Body of pancreas (tissue), 4 donors: ENCODE measurements at regions of chrX and their contacts with region 1.

Region 1: GRCh38 chrX:136546371-136546781 is 14.4 kb downstream of the VGLL1 start:
- DNase-seq: no peak
- ATAC-seq: no peak
- H3K4me3 ChIP-seq: no peak overlapping the region
- H3K27ac ChIP-seq: no peak overlapping the region
- H3K4me1 ChIP-seq: no peaks in the 10 kb centered on the region
- H3K27me3 ChIP-seq: no peaks in the 10 kb centered on the region
- CTCF ChIP-seq: no peak
- POLR2A ChIP-seq: no peak

Region 2: GRCh38 chrX:136488706-136489105 is 57.7 kb before region 1 on chrX:
- intact Hi-C with region 1: loop called (anchors 10 kb)
- DNase-seq: no peak
- ATAC-seq: no peak
- H3K4me3 ChIP-seq: no peak overlapping the region
- H3K27ac ChIP-seq: no peak overlapping the region
- H3K4me1 ChIP-seq: no peaks in the 10 kb centered on the region
- H3K27me3 ChIP-seq: no peaks in the 10 kb centered on the region
- CTCF ChIP-seq: peak in 1 of 7 experiments; percentile 12
- POLR2A ChIP-seq: no peak